ENCODE measurements at regions of chr1 and their contacts with region 1.

Region 1: GRCh38 chr1:166153525-166154314 is 13.1 kb downstream of the FAM78B start:
- DNase-seq: no peak
- H3K4me3 ChIP-seq: no peak overlapping the region
- H3K27ac ChIP-seq: no peak overlapping the region
- H3K4me1 ChIP-seq: no peaks in the 10 kb centered on the region
- H3K27me3 ChIP-seq: no peaks in the 10 kb centered on the region
- CTCF ChIP-seq: no peak

Region 2: GRCh38 chr1:164743976-164744375 is 1409.7 kb before region 1 on chr1:
- intact Hi-C with region 1: no loop called
- DNase-seq: no peak
- H3K4me3 ChIP-seq: no peak overlapping the region
- H3K27ac ChIP-seq: no peak overlapping the region
- H3K4me1 ChIP-seq: peaks cover 0 to 27% (median 16%) of the 10 kb centered on the region in 4 donors
- H3K27me3 ChIP-seq: no peaks in the 10 kb centered on the region
- CTCF ChIP-seq: no peak

Region 3: DNA sequence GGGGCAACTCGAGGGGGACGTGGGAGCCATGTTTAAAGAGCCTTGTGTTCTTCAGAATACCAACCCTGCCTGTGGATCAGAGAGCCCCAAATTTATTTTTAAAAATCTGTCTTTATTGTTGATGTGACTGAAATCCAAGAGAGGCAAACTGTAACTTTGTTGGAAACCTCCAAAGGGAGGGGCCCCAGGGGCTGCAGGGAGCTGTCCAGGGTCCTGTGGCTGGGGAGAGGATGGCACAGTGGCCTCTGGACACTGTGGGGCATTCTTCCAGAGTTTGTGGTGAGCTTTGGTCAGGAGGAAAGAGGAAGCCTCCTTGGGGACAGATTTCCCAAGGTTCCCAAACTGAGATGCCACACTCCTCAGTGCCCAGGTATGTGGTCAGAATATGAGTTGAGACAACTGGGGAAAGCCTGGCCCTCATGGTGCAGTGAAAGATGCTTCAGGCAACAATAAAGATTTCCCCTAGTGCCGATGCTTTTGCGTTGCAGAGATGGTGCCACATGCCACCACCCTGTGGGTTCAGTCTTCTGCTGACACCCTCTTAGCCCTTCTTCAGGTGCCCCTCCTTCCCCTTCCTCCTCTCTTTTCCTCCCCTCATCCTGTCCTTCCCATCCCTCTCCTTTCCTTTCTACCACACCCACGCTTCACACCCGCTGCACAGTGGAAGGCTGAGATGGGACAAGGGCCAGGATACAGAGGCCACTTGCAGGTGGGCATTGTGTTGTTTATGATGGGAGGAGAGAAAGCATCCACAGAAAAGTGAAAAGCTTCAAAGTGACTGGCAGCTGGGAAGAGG is 204.2 kb before region 1 on chr1:
- intact Hi-C with region 1: loop called (anchors 10 kb)
- DNase-seq: no peak
- H3K4me3 ChIP-seq: no peak overlapping the region
- H3K27ac ChIP-seq: no peak overlapping the region
- H3K4me1 ChIP-seq: no peaks in the 10 kb centered on the region
- H3K27me3 ChIP-seq: peaks cover 0 to 2% of the 10 kb centered on the region in 2 donors
- CTCF ChIP-seq: no peak

Region 4: GRCh38 chr1:166197141-166197540 is 43.4 kb after region 1 on chr1:
- intact Hi-C with region 1: no loop called
- DNase-seq: no peak
- H3K4me3 ChIP-seq: no peak overlapping the region
- H3K27ac ChIP-seq: no peak overlapping the region
- H3K4me1 ChIP-seq: no peaks in the 10 kb centered on the region
- H3K27me3 ChIP-seq: no peaks in the 10 kb centered on the region
- CTCF ChIP-seq: no peak

Region 5: DNA sequence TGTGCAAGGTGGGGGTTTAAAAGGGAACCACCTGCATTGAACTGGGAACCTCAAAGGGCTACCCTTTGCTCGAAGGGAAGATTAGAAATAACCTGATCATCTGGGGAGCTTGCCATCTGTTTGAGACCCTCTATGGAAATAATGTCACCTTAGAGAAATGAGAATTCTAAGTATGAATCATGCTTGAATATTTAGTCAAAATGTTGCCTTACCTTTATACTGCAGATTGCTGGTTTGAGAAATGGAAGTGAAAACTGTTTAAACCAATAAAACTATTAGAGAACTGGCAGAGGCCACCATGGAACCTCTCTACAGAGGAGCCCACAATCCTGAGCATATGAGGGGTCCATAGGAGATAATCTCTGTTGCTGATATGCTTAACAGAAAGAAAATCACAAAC is 144.3 kb after region 1 on chr1:
- intact Hi-C with region 1: no loop called
- DNase-seq: no peak
- H3K4me3 ChIP-seq: no peak overlapping the region
- H3K27ac ChIP-seq: no peak overlapping the region
- H3K4me1 ChIP-seq: no peaks in the 10 kb centered on the region
- H3K27me3 ChIP-seq: no peaks in the 10 kb centered on the region
- CTCF ChIP-seq: no peak

Measured in tibial artery (tissue), 4 donors.